ENCODE measurements at regions of chr17 and their contacts with region 1.

Region 1: DNA sequence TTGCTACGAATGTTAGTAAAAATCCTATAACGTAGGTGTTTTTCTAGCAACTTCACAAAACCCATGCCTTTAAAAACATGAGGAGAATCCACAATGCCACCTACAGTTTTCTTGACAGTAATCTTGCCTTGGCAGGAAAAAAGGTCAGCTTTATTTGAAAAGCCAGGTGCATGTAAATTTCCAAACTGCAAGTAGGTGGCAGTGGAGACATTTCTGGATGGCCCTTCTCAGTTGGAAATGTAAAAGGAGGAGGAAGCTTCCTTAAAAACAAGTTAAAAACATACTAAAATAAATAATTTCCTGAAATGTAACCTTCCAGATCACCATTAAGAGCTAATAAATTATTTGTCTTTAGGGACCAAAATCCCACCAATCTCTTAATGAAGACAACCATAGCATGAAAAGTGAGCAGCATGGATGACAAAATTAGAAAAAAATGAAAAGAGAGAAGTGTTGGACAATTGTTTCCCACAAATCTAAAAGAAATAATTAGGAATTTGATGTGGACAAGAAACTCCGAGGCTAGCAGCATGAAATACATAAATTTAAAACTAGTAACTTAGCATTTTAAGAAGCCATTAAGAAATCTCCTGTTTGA is 152.2 kb downstream of the SNX11 start:
- DNase-seq: no peak
- ATAC-seq: no peak

Region 2: GRCh38 chr17:48351831-48352332 is 92.1 kb after region 1 on chr17:
- intact Hi-C with region 1: no loop called
- DNase-seq: no peak
- ATAC-seq: no peak

Region 3: DNA sequence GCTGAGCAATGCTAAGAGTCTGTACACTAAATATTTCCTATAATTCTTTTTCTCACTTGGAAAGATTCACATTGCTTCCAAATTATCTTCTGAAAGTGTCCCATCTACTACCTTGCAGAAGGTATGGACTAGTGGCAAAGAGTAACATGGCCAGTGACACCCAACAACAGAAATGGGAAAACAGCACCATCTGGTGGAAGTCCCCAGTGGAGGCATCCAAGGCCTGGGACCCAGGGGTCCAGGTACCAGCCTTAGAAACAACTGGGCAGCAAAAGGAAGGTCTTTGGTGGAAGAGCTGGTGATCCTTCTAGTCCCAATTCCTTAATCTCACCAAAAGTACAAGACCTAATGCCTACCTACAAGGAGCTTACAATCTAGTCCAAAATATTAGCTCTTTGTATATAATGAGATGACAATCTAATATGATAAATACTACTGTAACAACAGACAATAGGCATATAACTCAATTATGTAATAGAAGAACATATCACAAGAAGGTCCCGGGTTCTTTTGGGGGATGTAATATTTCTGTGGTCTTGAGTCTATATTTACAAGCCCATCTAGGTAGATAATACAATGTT is 114.9 kb after region 1 on chr17:
- intact Hi-C with region 1: loop called (anchors 5 kb)
- DNase-seq: no peak
- ATAC-seq: peak; percentile 52